ENCODE measurements at regions of chr10 and their contacts with region 1.

Region 1: GRCh38 chr10:89954787-89955566 is 253.6 kb downstream of the KIF20B start:
- DNase-seq: no peak
- ATAC-seq: no peak
- H3K4me3 ChIP-seq: no peak overlapping the region
- H3K27ac ChIP-seq: no peak overlapping the region
- H3K4me1 ChIP-seq: no peaks in the 10 kb centered on the region
- H3K27me3 ChIP-seq: no peaks in the 10 kb centered on the region
- CTCF ChIP-seq: no peak
- EP300 ChIP-seq: no peak
- POLR2A ChIP-seq: no peak
- RAD21 ChIP-seq: no peak

Region 2: DNA sequence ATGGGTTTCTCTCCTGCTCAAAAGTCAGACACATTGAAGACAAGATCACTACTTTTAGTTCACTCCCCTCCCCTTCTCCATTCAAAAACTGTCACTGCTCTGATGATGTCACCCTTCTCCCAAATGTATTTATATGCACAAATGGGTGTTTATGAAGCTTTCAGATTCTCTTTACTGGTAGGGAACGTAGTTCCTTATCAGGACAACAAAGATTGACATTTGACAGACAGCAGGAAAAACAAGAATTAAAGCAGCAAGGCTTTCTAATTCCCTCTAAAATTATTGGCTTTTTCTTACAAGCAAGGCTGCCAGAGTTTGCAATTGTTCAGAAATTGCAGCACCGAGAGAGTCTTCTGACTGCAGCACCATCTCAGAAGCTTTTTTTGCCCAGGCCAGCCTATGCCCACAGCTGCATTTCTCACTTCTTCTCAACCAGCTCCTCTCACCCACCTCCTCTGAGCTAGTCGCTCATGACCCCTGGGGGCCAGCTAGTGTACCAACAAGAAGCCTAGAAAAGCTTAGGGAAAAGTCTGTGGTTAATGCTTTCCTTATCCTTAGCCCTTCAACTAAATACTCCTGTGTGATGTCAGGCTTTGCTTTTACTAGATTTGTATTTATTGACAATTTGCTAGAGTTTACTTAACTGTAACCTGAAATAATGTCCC is 637.8 kb after region 1 on chr10:
- CTCF ChIA-PET with region 1: no interaction called
- POLR2A ChIA-PET with region 1: no interaction called
- in situ Hi-C with region 1: no loop called
- intact Hi-C with region 1: loop called (anchors 2 kb)
- DNase-seq: peak; percentile 42
- ATAC-seq: peak; percentile 96
- H3K4me3 ChIP-seq: no peak overlapping the region
- H3K27ac ChIP-seq: no peak overlapping the region
- H3K4me1 ChIP-seq: peaks cover 10% of the 10 kb centered on the region
- H3K27me3 ChIP-seq: no peaks in the 10 kb centered on the region
- CTCF ChIP-seq: peak; percentile 62
- EP300 ChIP-seq: no peak
- POLR2A ChIP-seq: no peak
- RAD21 ChIP-seq: no peak

Measured in HepG2 (cell line).